Activated T-helper 2 cell treated with anti-CD3 and anti-CD28 coated beads, Interferon-gamma antibody, Interleukin-2, Interleukin-4, amounts not matched to agents 10 μg/mL and 5 μg/mL and 100 μg/mL, durations not matched to agents 14 hours and 24 hours and 36 hours (primary cell): ENCODE measurements at regions of chr22 and their contacts with region 1.

Region 1: GRCh38 chr22:41204992-41205900 is at the start of gene L3MBTL2:
- DNase-seq: peak; percentile 98
- H3K4me3 Mint-ChIP-seq: peak within 1 kb of the TSS; percentile 85
- H3K27ac Mint-ChIP-seq: peak within 1 kb of the TSS; percentile 83
- H3K4me1 Mint-ChIP-seq: peaks cover 12% of the 10 kb centered on the region
- H3K27me3 Mint-ChIP-seq: peaks cover 15% of the 10 kb centered on the region
- total RNA-seq, gene L3MBTL2: 39.3 and 42.2 TPM in 2 replicates

Region 2: GRCh38 chr22:41078931-41079330 is 126.3 kb before region 1 on chr22:
- intact Hi-C with region 1: no loop called
- DNase-seq: no peak
- H3K4me3 Mint-ChIP-seq: no peak overlapping the region
- H3K27ac Mint-ChIP-seq: no peak overlapping the region
- H3K4me1 Mint-ChIP-seq: no peaks in the 10 kb centered on the region
- H3K27me3 Mint-ChIP-seq: peaks cover 2% of the 10 kb centered on the region

Region 3: DNA sequence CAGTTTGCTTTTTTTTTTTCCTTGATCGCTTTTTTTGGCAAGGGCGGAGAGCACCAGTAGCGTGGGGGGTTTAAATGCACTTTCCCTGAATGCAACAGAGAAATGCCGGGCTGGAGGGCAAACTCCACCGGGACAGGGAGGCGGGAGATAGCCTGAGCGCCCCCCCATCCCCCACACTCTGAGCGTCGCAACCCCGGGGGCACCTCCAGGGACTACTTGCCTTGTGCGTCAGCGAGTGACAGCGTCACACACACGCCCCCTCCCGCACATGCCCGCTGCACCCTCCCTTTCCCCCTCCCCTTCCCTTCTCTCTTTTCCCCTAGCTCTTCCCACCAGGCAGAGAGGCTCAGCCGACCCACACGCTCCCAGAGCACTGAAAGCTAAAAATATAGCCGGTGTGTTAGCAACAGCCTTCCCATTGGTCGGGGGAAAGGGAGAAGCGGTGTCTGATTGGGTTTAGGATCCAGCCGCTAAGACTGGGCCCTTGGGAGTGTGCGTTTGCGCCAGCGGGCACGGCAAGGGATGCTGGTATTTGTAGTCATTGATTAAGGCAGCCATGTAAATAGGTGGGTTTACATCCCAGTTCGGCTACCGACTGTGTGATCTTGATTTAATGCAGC is 243.1 kb after region 1 on chr22:
- intact Hi-C with region 1: loop called (anchors 10 kb)
- DNase-seq: peak; percentile 91
- H3K4me3 Mint-ChIP-seq: peak overlapping the region; percentile 96
- H3K27ac Mint-ChIP-seq: peak overlapping the region; percentile 98
- H3K4me1 Mint-ChIP-seq: peaks cover 6% of the 10 kb centered on the region
- H3K27me3 Mint-ChIP-seq: no peaks in the 10 kb centered on the region